ENCODE measurements at regions of chr5 and their contacts with region 1.

Region 1: GRCh38 chr5:41636605-41637004 is 126.2 kb upstream of the PLCXD3 start:
- DNase-seq: peak in 1 of 2 experiments; percentile 52
- H3K4me3 ChIP-seq: no peak overlapping the region
- H3K27ac ChIP-seq: no peak overlapping the region
- H3K4me1 ChIP-seq: peaks cover 0 to 3% (median 0%) of the 10 kb centered on the region in 4 experiments; a peak in 2 of 7 replicates
- H3K27me3 ChIP-seq: no peaks in the 10 kb centered on the region
- CTCF ChIP-seq: peak in 2 of 3 experiments; percentile 35 to 60; a peak in 3 of 4 replicates
- EP300 ChIP-seq: no peak
- POLR2A ChIP-seq: no peak
- RAD21 ChIP-seq: peak; percentile 20 to 42; a peak in 3 of 4 replicates

Region 2: DNA sequence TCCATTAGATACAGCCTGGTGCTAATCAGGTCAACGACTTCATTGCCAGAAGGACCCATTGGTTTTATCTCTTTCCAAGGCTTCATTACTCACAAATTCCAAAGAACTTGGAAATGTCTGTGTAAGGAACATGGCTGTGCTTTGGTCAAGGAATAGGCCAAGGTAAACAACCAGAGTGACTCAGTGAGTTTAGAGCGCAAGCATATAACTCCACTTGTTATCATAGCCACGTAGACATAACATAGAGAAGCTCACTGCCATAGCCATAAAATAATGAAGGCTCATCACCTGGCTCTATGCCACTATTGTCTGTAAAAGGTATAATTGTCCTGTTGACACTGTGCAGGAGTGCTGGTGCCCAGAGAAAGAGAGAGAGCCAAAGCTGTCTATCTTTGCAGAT is 13.1 kb after region 1 on chr5:
- CTCF ChIA-PET with region 1: interaction called, 28 read pairs
- POLR2A ChIA-PET with region 1: no interaction called
- DNase-seq: no peak
- H3K4me3 ChIP-seq: no peak overlapping the region
- H3K27ac ChIP-seq: no peak overlapping the region
- H3K4me1 ChIP-seq: no peaks in the 10 kb centered on the region
- H3K27me3 ChIP-seq: no peaks in the 10 kb centered on the region; a peak in 1 of 7 replicates
- CTCF ChIP-seq: no peak
- EP300 ChIP-seq: no peak
- POLR2A ChIP-seq: no peak
- RAD21 ChIP-seq: no peak

Region 3: GRCh38 chr5:41843456-41844370 is 207.1 kb after region 1 on chr5:
- CTCF ChIA-PET with region 1: no interaction called
- POLR2A ChIA-PET with region 1: no interaction called
- DNase-seq: no peak
- H3K4me3 ChIP-seq: no peak overlapping the region
- H3K27ac ChIP-seq: no peak overlapping the region
- H3K4me1 ChIP-seq: no peaks in the 10 kb centered on the region
- H3K27me3 ChIP-seq: no peaks in the 10 kb centered on the region
- CTCF ChIP-seq: peak in 2 of 3 experiments; percentile 57 to 58; a peak in 3 of 4 replicates
- EP300 ChIP-seq: no peak
- POLR2A ChIP-seq: no peak
- RAD21 ChIP-seq: peak; percentile 83